Dorsolateral prefrontal cortex (tissue), 120 donors: ENCODE measurements at regions of chr19 and their contacts with region 1.

Region 1: GRCh38 chr19:38374429-38375176 is at the start of gene PSMD8:
- DNase-seq: peak; percentile 99 to 100 (median 100)
- H3K4me3 ChIP-seq: peak within 1 kb of the TSS; percentile 63 to 99 (median 93)
- H3K27ac ChIP-seq: peak within 1 kb of the TSS; percentile 66 to 97 (median 90)
- H3K27me3 ChIP-seq: no peaks in the 10 kb centered on the region
- CTCF ChIP-seq: peak in 55 of 56 donors; percentile 17 to 87 (median 55)
- total RNA-seq, gene PSMD8: 65.8 to 185 (median 140) TPM

Region 2: GRCh38 chr19:38239816-38240215 is 134.8 kb before region 1 on chr19:
- intact Hi-C with region 1: loop called in 1 of 2 experiments (anchors 5 kb)
- DNase-seq: no peak
- H3K4me3 ChIP-seq: no peak overlapping the region
- H3K27ac ChIP-seq: peak overlapping the region in 1 of 59 donors; percentile 39
- H3K27me3 ChIP-seq: no peaks in the 10 kb centered on the region
- CTCF ChIP-seq: no peak

Region 3: GRCh38 chr19:38304866-38305429 is 69.7 kb before region 1 on chr19:
- intact Hi-C with region 1: no loop called
- DNase-seq: no peak
- H3K4me3 ChIP-seq: no peak overlapping the region
- H3K27ac ChIP-seq: peak overlapping the region in 1 of 59 donors; percentile 57
- H3K27me3 ChIP-seq: no peaks in the 10 kb centered on the region
- CTCF ChIP-seq: no peak

Region 4: GRCh38 chr19:38388349-38389100 is 13.9 kb after region 1 on chr19 and contains the start of gene SPRED3:
- intact Hi-C with region 1: no loop called
- DNase-seq: peak in 6 of 10 donors; percentile 25 to 71 (median 52)
- H3K4me3 ChIP-seq: peak within 1 kb of the TSS; percentile 43 to 83 (median 71)
- H3K27ac ChIP-seq: peak within 1 kb of the TSS in 57 of 59 donors; percentile 5 to 93 (median 73)
- H3K27me3 ChIP-seq: no peaks in the 10 kb centered on the region
- CTCF ChIP-seq: no peak
- total RNA-seq, gene SPRED3: 4.8 to 22.5 (median 10.3) TPM